Activated CD4-positive, alpha-beta T cell treated with anti-CD3 and anti-CD28 coated beads, Interleukin-2, amount 10 ng/mL, durations not matched to agents 7 days and 5 days (primary cell): ENCODE measurements at regions of chr2 and their contacts with region 1.

Region 1: DNA sequence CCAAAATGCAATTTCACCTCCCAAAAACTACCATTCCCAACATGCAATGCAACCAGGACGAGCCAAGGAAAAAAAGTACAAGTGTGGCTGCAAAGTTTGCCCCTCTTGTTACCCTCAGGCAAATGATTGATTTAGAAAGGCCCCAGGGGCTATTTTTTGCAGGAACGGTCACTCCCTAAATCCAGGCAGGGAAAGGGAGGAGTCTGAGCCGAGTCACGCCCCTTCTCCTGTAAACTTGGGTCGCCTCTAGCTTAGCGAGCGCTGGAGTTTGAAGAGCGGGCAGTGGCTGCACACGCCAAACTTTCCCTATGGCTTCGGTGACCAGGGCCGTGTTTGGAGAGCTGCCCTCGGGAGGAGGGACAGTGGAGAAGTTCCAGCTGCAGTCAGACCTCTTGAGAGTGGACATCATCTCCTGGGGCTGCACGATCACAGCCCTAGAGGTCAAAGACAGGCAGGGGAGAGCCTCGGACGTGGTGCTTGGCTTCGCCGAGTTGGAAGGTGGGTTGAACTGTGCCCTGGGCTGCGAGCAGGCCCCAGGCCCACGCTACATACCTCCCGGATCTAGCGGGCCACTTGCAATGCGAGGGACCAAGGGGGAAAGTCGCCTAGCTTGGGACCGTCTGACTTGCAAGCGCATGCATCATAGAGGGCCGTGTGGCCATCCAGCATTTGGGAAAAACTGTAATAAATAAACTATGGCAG is at the start of gene GALM:
- DNase-seq: peak; percentile 64
- H3K4me3 Mint-ChIP-seq: peak within 1 kb of the TSS; percentile 85
- H3K27ac Mint-ChIP-seq: peak within 1 kb of the TSS; percentile 95
- H3K4me1 Mint-ChIP-seq: peaks cover 70% of the 10 kb centered on the region
- H3K27me3 Mint-ChIP-seq: no peaks in the 10 kb centered on the region
- total RNA-seq, gene GALM: 39.7 to 41.1 TPM

Region 2: DNA sequence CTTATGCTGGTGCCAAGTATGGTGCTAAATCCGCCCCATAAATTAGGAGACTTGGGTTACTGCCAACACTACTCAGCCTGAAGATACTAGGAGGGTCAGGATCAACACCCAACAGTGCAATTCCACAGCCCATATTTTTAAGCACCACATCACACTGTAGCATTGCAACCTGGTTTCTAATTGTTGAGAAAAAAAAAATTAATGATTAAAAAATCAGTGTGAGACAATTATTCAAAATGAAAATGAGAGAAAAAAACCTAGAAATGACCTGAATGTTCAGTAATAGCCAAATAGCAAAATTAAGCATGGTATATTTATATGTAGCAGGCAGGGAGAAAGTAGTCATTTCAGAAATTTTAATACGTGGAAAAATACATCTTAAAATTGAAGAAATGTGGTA is 34.0 kb before region 1 on chr2:
- CTCF ChIA-PET with region 1: no interaction called
- POLR2A ChIA-PET with region 1: no interaction called
- DNase-seq: no peak
- H3K4me3 Mint-ChIP-seq: no peak overlapping the region
- H3K27ac Mint-ChIP-seq: no peak overlapping the region
- H3K4me1 Mint-ChIP-seq: peaks cover 32% of the 10 kb centered on the region
- H3K27me3 Mint-ChIP-seq: no peaks in the 10 kb centered on the region

Region 3: GRCh38 chr2:38685116-38685735 is 19.2 kb after region 1 on chr2:
- CTCF ChIA-PET with region 1: interaction called, 14 read pairs
- POLR2A ChIA-PET with region 1: no interaction called
- DNase-seq: no peak
- H3K4me3 Mint-ChIP-seq: no peak overlapping the region
- H3K27ac Mint-ChIP-seq: peak overlapping the region; percentile 72
- H3K4me1 Mint-ChIP-seq: peaks cover 58% of the 10 kb centered on the region
- H3K27me3 Mint-ChIP-seq: no peaks in the 10 kb centered on the region